Brain microvascular endothelial cell (primary cell): ENCODE measurements at regions of chr10 and their contacts with region 1.

Region 1: DNA sequence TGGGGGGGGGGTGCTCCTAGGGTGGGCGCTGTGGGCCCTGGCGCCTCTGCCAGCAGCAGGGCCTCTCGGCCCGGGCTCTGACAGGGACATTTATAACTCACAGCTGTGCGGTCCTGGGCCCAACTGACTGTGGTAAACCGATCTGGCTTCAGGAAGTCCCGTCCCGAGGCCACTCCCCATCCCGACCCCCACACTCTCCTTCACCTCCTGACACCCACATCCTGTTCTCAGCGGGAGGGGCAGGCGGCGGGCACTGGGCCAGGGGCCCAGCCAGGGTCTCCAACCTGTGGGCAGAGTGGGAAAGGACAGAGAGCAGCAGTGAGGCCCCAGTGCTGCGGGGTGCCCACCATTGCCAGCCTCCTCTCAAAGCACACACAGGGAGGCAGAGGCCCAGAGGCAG is 69.1 kb downstream of the ZMIZ1 start:
- DNase-seq: no peak
- H3K4me3 ChIP-seq: no peak overlapping the region
- H3K27ac ChIP-seq: peak overlapping the region; percentile 87
- H3K27me3 ChIP-seq: no peaks in the 10 kb centered on the region
- CTCF ChIP-seq: no peak

Region 2: GRCh38 chr10:79192677-79193003 is 54.8 kb after region 1 on chr10:
- in situ Hi-C with region 1: loop called (anchors 5 kb)
- DNase-seq: no peak
- H3K4me3 ChIP-seq: no peak overlapping the region
- H3K27ac ChIP-seq: no peak overlapping the region
- H3K27me3 ChIP-seq: no peaks in the 10 kb centered on the region
- CTCF ChIP-seq: no peak